ENCODE measurements at regions of chr1 and their contacts with region 1.

Region 1: DNA sequence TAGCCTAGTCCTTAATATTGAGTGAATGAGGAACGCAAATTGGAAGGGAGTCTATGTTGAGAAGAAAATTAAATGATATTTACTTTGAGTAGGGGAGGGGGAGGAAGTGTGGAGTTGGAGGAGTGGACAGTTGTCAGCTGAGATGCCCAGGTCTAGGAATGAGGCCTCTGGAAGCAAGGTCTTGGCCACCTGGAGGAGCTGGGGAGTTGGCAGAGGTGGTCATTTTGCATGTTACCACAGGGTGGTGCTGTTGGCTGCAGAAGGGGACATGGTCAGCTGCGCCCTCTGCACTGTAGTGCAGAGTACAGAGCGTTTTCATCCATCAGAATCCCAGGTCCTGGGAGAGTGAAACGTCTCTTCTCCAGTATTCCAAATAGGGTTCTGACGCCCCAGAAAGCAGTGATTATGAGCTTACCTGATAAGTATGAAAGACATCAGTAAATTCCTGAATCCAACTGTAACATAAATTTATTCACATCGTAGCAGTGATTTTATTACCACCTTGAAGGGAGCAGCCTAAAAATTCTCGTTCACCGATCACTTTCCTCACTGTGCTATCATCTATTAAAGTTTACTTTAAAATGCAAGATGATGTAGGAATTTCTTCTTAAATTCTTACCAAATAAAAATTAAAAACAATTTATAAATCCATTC is 13.8 kb downstream of the PARK7 start:
- DNase-seq: peak; percentile 52
- ATAC-seq: peak; percentile 75
- H3K4me3 Mint-ChIP-seq: no peak overlapping the region
- H3K27ac Mint-ChIP-seq: no peak overlapping the region
- H3K4me1 Mint-ChIP-seq: peaks cover 15% of the 10 kb centered on the region
- H3K27me3 Mint-ChIP-seq: no peaks in the 10 kb centered on the region

Region 2: GRCh38 chr1:7991504-7992440 is 16.4 kb after region 1 on chr1:
- CTCF ChIA-PET with region 1: interaction called, 14 read pairs
- DNase-seq: no peak
- ATAC-seq: no peak
- H3K4me3 Mint-ChIP-seq: no peak overlapping the region
- H3K27ac Mint-ChIP-seq: no peak overlapping the region
- H3K4me1 Mint-ChIP-seq: peaks cover 13% of the 10 kb centered on the region
- H3K27me3 Mint-ChIP-seq: no peaks in the 10 kb centered on the region

Measured in activated CD8-positive, alpha-beta memory T cell treated with anti-CD3 and anti-CD28 coated beads, Interleukin-2, amount 10 ng/mL, durations not matched to agents 7 days and 5 days (primary cell).